HEK293T (cell line): ENCODE measurements at regions of chr3 and their contacts with region 1.

Region 1: GRCh38 chr3:138186803-138187295 is 252 bp upstream of the ARMC8 start:
- DNase-seq: peak; percentile 96

Region 2: DNA sequence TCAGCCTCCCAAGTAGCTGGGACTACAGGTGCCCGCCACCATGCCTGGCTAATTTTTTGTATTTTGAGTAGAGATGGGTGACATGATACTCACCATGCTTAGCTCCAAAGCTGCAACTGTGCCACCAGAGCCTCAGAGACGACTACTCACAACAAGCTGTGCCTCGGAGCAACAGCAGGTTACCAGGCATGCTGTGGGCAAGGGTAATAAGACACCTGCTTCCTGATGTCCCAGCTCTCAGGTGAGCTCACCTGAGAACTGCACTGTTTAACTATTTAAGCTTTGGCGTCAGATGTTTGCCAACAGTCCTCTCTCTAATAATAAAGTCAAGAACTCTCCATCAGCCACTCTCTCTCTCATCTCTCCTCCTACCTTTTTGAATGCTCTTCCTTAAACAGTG is 78.8 kb before region 1 on chr3:
- CTCF ChIA-PET with region 1: no interaction called
- POLR2A ChIA-PET with region 1: no interaction called
- DNase-seq: no peak

Region 3: DNA sequence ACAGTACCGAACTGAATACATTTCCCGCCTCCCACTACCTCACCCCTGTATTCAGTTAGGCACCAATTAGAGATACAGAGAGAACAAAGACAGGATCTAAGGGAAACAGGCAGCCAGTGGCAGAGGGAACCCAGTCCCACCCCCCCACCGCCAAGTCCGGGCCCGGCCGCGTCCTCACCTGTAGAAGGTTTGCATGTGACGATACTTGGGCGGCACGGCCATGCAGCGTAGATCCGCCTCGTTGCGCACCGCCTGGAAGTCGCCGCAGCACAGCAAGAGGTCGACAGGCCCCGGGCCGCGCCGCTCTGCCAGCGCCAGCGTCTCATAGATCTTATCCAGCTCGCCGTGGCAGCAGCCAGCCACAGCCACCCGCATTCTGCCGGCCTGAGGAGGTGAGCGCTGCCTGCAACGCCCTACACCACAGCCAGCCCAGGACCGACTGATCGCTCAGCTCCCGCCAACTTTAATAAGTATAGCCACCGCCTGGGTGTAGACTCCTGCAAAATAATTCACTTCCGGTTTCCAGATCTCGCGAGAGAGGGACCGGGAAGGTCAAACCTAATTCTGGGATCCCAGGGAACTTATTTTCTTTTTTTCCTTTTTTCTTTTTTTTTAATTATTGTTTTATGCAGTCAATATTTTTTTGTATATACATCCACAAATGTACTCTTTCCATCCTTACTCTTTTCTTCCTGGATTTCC is 12.3 kb before region 1 on chr3 and contains the start of gene DBR1:
- CTCF ChIA-PET with region 1: no interaction called
- POLR2A ChIA-PET with region 1: interaction called, 35 read pairs
- DNase-seq: peak; percentile 83